AG04449 (cell line): ENCODE measurements at regions of chr20 and their contacts with region 1.

Region 1: GRCh38 chr20:21235484-21236445 is 67.4 kb upstream of the XRN2 start:
- DNase-seq: no peak
- H3K4me3 ChIP-seq: no peak overlapping the region
- CTCF ChIP-seq: peak; percentile 97

Region 2: GRCh38 chr20:20837574-20838021 is 398.2 kb before region 1 on chr20:
- CTCF ChIA-PET with region 1: interaction called, 24 read pairs
- POLR2A ChIA-PET with region 1: no interaction called
- DNase-seq: no peak
- H3K4me3 ChIP-seq: no peak overlapping the region
- CTCF ChIP-seq: peak; percentile 60

Region 3: DNA sequence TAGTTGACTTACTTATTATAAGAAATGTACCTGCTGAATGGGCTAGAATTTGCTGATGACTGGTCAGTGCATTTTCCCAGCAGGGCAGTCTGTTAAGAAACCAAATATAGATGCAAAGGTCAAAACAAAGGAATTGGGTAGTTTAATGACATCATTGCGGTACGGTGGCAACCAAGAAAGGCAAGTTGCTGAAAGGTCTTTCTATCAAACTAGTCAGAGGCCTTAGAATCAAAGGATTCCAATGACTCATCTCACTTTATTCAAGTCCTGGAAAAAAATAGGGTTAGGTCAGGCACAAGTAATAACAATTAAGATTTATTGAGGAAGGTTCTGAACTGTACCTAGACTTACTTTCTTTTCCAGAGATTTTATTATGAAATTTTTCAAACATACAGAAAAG is 33.5 kb before region 1 on chr20:
- CTCF ChIA-PET with region 1: interaction called, 11 read pairs
- POLR2A ChIA-PET with region 1: no interaction called
- DNase-seq: no peak
- H3K4me3 ChIP-seq: no peak overlapping the region
- CTCF ChIP-seq: no peak

Region 4: DNA sequence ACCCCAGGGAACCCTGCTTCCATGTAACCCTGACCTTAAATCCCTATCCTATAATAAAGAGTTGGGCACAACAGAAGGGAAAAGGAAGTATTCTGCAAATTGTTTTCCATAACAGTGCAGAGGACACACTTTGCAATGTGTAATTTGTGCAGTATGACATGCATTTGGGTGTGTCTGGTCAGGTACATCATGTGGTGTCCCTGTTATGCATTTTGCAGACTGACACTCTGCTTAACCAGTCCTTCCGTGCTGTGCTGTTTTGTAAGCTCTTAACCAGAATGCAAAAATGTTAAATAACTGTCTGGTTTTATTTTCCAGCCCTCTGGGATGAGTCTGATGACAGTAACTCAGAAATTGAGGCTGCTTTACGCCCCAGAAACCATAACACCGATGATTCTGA is 10.4 kb after region 1 on chr20:
- CTCF ChIA-PET with region 1: interaction called, 44 read pairs
- POLR2A ChIA-PET with region 1: no interaction called
- DNase-seq: no peak
- H3K4me3 ChIP-seq: no peak overlapping the region
- CTCF ChIP-seq: no peak

Region 5: DNA sequence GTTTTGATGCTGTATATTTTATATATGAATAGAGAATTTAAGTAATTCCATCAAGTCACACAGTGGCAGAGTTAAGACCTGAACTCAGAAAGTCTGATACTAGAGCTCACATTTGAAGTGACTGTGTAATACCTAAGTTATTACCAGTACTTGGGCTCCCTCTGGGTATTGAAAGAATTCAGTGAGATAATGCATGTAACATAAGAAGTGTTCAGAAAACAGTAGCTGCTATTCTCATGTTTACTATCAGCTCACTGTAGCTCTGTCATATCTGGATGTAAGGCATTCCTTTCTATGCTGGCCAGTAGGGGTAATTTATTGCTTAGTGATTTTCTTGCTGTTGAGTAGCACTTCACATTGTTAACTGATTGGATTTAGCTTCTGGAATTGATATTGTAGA is 116.9 kb after region 1 on chr20:
- CTCF ChIA-PET with region 1: interaction called, 14 read pairs
- POLR2A ChIA-PET with region 1: no interaction called
- DNase-seq: peak; percentile 38
- H3K4me3 ChIP-seq: no peak overlapping the region
- CTCF ChIP-seq: no peak

Region 6: GRCh38 chr20:21490095-21490494 is 254.3 kb after region 1 on chr20:
- CTCF ChIA-PET with region 1: interaction called, 374 read pairs
- POLR2A ChIA-PET with region 1: no interaction called
- DNase-seq: no peak
- H3K4me3 ChIP-seq: no peak overlapping the region
- CTCF ChIP-seq: no peak

Region 7: GRCh38 chr20:21571841-21572690 is 336.3 kb after region 1 on chr20:
- CTCF ChIA-PET with region 1: interaction called, 19 read pairs
- POLR2A ChIA-PET with region 1: no interaction called
- DNase-seq: no peak
- H3K4me3 ChIP-seq: no peak overlapping the region
- CTCF ChIP-seq: peak; percentile 73